Transverse colon (tissue), 4 donors: ENCODE measurements at regions of chr9 and their contacts with region 1.

Region 1: GRCh38 chr9:129610473-129611301 is 10.2 kb downstream of the C9orf50 start:
- DNase-seq: peak; percentile 82
- H3K4me3 ChIP-seq: peak overlapping the region; percentile 31 to 75 (median 63)
- H3K27ac ChIP-seq: peak overlapping the region; percentile 85 to 94 (median 89)
- H3K4me1 ChIP-seq: peaks cover 22 to 44% (median 37%) of the 10 kb centered on the region in 4 donors
- H3K27me3 ChIP-seq: no peaks in the 10 kb centered on the region
- CTCF ChIP-seq: peak; percentile 78 to 96 (median 94)
- EP300 ChIP-seq: no peak
- POLR2A ChIP-seq: peak; percentile 13

Region 2: GRCh38 chr9:129139993-129140396 is 470.7 kb before region 1 on chr9:
- in situ Hi-C with region 1: loop called (anchors 5 to 10 kb)
- intact Hi-C with region 1: loop called (anchors 1 kb)
- DNase-seq: peak; percentile 87
- H3K4me3 ChIP-seq: peak overlapping the region; percentile 11 to 46 (median 28)
- H3K27ac ChIP-seq: peak overlapping the region; percentile 99 to 100 (median 100)
- H3K4me1 ChIP-seq: peaks cover 39 to 69% (median 58%) of the 10 kb centered on the region in 4 donors
- H3K27me3 ChIP-seq: no peaks in the 10 kb centered on the region
- CTCF ChIP-seq: no peak
- EP300 ChIP-seq: peak; percentile 77
- POLR2A ChIP-seq: peak; percentile 72

Region 3: DNA sequence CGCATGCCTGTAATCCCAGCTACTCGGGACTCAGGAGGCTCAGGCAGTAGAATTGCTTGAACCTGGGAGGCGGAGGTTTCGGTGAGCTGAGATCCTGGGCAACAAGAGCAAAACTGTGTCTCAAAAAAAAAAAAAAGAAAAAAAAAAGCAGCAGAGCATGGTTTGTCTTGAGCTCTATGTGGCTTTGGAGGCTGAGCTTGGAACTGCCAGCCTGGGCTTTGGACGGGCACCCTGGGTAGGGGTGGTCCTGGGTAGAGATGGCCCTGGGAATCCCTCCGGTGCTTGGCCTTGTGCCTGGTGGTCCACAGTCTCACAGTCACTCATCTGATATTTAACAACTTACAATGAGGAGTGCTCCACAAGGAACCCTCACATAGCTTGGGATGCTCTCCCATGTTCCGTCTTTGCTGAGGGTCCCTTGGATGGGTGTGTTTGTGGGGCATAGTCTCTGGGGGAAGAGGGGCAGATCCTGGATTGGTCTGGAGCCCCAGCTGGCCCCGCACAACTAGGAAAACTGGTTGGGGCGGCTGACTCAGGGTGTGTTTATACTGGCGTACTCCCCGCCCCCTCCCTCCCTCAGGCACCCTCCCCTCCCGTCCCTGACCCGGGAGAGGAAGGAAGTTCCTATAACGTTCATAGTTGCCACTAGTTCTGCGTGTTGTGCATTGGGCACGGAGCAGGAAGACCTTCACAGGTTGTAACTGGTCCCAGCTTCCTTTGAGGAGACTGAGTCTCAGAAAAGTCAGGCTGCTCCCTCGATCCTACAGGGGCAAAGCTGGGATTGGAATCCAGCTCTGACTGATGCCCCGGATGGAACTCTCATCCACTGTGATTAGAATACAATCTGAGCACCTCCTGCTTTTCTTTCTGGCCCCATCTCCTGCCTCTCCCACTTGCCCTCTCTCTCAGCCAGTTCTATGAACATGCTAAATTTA is 443.8 kb before region 1 on chr9:
- in situ Hi-C with region 1: loop called in 1 of 4 experiments (anchors 10 kb)
- intact Hi-C with region 1: loop called (anchors 5 kb)
- DNase-seq: peak; percentile 92
- H3K4me3 ChIP-seq: peak overlapping the region in 1 of 4 donors; percentile 37
- H3K27ac ChIP-seq: peak overlapping the region; percentile 80 to 90 (median 86)
- H3K4me1 ChIP-seq: peaks cover 25 to 45% (median 35%) of the 10 kb centered on the region in 4 donors
- H3K27me3 ChIP-seq: no peaks in the 10 kb centered on the region
- CTCF ChIP-seq: no peak
- EP300 ChIP-seq: no peak
- POLR2A ChIP-seq: peak; percentile 61

Region 4: GRCh38 chr9:129177791-129178559 is 432.7 kb before region 1 on chr9 and contains the start of gene IER5L:
- in situ Hi-C with region 1: no loop called
- intact Hi-C with region 1: loop called (anchors 5 kb)
- DNase-seq: peak; percentile 96
- H3K4me3 ChIP-seq: peak within 1 kb of the TSS; percentile 58 to 93 (median 91)
- H3K27ac ChIP-seq: peak within 1 kb of the TSS; percentile 93 to 99 (median 96)
- H3K4me1 ChIP-seq: peaks cover 12 to 59% (median 48%) of the 10 kb centered on the region in 4 donors
- H3K27me3 ChIP-seq: no peaks in the 10 kb centered on the region
- CTCF ChIP-seq: peak in 1 of 5 experiments; percentile 16
- EP300 ChIP-seq: no peak
- POLR2A ChIP-seq: peak; percentile 97
- total RNA-seq, gene IER5L: 1.8 to 6.5 (median 5.2) TPM

Region 5: DNA sequence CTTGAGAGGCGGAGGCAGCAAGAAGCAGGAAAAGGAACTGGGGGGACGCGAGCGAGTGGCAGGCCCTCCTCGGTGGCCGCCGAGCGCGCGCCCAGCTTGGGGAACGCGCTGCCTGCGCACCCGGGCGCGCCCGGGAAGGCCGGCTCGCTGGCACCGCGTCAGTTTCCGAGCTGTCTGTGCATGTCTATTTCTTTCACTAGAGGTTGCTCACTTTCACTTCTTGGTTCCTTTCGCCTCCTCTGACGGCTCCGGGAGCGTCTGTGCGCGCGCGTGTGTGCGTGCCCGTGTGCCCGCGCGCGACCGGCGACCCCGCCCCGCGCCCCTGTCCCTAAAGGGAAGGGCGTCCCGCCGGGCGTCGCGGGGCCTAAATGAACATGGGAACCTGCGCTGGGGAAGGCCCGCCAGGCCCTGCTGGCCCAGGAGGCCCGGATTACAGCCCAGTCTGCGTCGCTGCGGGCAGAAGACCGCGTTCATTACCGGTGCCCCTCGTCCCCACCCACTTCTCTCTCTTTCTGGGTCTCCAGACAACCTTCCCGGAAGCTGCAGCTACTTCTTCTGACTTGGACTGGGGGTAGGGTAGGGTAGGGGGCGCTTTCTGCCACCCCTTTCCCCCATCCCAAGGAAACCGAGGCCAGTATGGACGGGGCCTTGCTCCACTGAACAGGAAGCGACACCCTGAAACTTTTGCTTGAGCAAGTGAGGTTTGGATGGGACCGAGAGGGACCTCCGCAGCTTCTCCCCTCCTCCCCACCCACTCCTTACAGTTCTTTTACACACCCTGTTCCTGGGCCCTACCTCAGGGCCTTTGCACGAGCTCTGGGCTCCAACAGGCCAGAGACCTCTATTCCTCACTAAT is 226.9 kb before region 1 on chr9:
- in situ Hi-C with region 1: no loop called
- intact Hi-C with region 1: loop called (anchors 10 kb)
- DNase-seq: peak; percentile 82
- H3K4me3 ChIP-seq: peak overlapping the region; percentile 41 to 76 (median 54)
- H3K27ac ChIP-seq: peak overlapping the region; percentile 91 to 98 (median 95)
- H3K4me1 ChIP-seq: peaks cover 12 to 22% (median 17%) of the 10 kb centered on the region in 4 donors
- H3K27me3 ChIP-seq: no peaks in the 10 kb centered on the region
- CTCF ChIP-seq: peak in 2 of 5 experiments; percentile 26 to 33
- EP300 ChIP-seq: no peak
- POLR2A ChIP-seq: peak; percentile 58

Region 6: DNA sequence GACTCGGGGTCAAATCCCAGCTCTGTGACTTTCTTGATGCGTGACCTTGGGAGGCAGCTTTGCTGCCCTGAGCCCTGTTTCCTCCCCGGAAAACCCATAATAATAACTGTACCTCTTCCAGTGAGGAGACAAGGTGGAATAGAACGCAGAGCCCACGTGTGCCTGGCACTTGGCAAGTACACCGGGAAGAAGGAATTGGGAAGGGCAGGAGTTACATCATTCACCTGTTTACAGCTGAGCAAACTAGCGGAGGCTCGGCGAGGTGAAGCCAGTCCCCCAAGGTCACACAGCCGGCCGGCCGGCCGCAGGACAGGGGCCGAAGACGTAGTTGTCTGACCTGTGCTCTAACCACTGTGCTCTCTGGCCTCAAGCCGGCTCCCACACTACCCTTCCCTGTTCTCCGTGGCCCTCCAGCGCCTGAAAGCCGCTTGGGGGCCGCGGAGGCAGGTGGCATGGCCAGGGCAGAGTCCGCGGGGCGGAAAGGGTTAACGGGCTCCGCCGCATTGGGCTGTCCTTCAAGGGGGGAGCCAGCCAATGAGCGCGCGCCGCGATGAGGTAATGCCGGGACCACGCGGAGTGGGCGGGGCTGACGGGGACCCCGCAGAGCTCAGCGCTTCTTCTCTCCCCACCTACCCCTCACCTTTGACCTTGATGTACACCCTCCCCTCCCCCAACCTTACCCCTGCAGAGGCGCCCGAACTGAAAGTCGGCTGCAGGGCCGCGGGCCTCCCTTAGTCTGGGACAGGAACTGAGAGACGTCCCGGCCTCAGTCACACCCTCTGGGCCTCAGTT is 115.0 kb before region 1 on chr9:
- in situ Hi-C with region 1: loop called in 1 of 4 experiments (anchors 10 kb)
- intact Hi-C with region 1: loop called (anchors 2 kb)
- DNase-seq: peak; percentile 94
- H3K4me3 ChIP-seq: peak overlapping the region; percentile 48 to 53 (median 51)
- H3K27ac ChIP-seq: peak overlapping the region; percentile 92 to 99 (median 96)
- H3K4me1 ChIP-seq: peaks cover 17 to 73% (median 59%) of the 10 kb centered on the region in 4 donors
- H3K27me3 ChIP-seq: no peaks in the 10 kb centered on the region
- CTCF ChIP-seq: peak in 1 of 5 experiments; percentile 10
- EP300 ChIP-seq: peak; percentile 4
- POLR2A ChIP-seq: peak; percentile 83